GM12878 (cell line): ENCODE measurements at regions of chr1 and their contacts with region 1.

Region 1: DNA sequence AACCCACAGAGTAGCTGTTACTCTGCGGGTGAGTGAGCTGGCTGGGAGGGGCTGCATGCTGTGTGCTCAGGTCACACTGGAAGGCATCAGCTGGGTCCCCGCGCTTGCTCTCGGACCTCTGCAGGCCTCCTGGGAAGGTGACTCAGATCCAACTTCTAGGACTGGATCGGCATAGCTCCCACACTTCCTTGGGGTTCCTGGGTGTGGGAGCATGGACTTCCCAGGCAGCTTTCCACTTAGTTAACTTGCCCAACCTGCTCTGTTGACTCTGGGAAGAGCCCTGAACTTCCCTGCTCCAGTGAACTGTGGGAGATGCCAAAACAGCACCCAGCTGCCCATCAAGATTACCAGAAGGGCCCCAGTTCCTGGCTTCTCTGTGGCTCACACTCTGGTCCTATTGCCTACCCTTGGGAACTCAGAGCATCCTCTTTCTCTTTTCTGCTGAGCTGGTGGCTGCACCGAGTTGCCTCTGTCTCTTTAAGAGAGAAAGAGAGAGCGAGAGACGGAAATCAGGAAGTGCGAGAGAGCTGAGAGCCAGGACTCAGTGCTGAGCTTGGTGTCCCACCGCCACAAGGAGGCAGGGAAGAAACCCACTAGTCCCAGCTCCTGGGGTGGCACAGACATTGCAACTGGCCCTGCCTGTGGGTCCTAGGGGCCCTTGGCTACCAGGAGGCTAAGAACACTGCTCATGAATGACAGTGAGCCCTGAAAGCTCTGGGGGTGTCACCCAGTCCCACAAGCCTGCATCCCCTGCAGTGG is at the start of gene IKBKE:
- DNase-seq: no peak
- ATAC-seq: peak; percentile 73
- H3K4me3 ChIP-seq: peak within 1 kb of the TSS; percentile 94
- H3K27ac ChIP-seq: peak within 1 kb of the TSS; percentile 88
- H3K4me1 ChIP-seq: peaks cover 66% of the 10 kb centered on the region
- H3K27me3 ChIP-seq: no peaks in the 10 kb centered on the region
- CTCF ChIP-seq: peak; percentile 7 to 22 (median 17); a peak in 1 of 6 replicates
- EP300 ChIP-seq: no peak
- POLR2A ChIP-seq: peak; percentile 68
- RAD21 ChIP-seq: no peak
- polyA plus RNA-seq, gene IKBKE: 12.8 to 19.2 TPM

Region 2: DNA sequence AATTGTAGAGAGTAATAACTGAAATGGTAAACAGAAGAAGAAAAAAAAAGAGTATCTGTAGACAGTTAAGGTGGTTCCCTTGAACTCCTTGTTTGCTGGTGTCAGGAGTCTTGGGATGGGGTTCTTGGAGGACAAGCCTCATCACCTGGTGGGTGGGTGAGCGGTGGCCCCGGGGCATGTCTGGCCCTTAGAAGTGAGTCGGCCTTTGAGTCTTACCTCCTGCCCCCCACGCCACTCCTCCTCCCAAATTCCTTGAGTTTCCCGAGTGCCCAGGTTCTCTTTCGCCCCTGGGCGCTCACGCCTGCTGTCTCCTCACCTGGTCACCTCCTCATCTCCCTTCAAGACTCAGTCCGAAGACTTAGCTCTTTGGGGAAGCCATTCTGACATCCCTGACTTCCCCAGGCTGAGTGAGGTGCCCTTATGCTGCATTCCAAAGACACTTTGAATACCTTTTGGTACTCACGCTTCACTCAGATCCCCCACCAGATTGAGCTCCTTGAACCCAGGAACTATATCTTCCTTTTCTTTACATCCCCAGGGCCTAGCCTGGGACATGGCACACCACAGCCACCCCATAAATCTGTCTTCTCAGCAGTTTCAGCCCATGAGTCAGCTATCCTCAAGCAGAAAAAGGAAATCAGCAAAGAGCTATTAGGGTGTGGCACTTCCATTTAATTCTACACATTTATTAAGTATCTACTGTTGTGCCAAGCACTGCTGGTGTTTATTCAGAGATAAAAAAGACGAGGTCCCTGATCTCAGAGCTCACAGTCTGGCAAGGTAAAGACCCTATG is 13.3 kb before region 1 on chr1:
- CTCF ChIA-PET with region 1: interaction called, 199 read pairs
- POLR2A ChIA-PET with region 1: interaction called, 4 read pairs
- RAD21 ChIA-PET with region 1: interaction called, 11 read pairs
- SMC1A ChIA-PET with region 1: interaction called, 26 read pairs
- in situ Hi-C with region 1: no loop called
- intact Hi-C with region 1: no loop called
- DNase-seq: no peak
- ATAC-seq: no peak
- H3K4me3 ChIP-seq: no peak overlapping the region
- H3K27ac ChIP-seq: no peak overlapping the region
- H3K4me1 ChIP-seq: no peaks in the 10 kb centered on the region
- H3K27me3 ChIP-seq: no peaks in the 10 kb centered on the region
- CTCF ChIP-seq: no peak
- EP300 ChIP-seq: no peak
- POLR2A ChIP-seq: no peak
- RAD21 ChIP-seq: no peak

Region 3: DNA sequence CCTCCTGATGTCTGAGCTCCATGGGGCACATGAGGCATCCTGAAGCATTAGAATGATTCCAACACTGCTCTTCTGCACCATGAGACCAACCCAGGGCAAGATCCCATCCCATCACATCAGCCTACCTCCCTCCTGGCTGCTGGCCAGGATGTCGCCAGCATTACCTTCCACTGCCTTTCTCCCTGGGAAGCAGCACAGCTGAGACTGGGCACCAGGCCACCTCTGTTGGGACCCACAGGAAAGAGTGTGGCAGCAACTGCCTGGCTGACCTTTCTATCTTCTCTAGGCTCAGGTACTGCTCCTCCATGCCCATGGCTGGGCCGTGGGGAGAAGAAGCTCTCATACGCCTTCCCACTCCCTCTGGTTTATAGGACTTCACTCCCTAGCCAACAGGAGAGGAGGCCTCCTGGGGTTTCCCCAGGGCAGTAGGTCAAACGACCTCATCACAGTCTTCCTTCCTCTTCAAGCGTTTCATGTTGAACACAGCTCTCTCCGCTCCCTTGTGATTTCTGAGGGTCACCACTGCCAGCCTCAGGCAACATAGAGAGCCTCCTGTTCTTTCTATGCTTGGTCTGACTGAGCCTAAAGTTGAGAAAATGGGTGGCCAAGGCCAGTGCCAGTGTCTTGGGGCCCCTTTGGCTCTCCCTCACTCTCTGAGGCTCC is 26.1 kb after region 1 on chr1:
- CTCF ChIA-PET with region 1: interaction called, 18 read pairs
- POLR2A ChIA-PET with region 1: interaction called, 37 read pairs
- RAD21 ChIA-PET with region 1: interaction called, 32 read pairs
- SMC1A ChIA-PET with region 1: interaction called, 19 read pairs
- in situ Hi-C with region 1: no loop called
- intact Hi-C with region 1: no loop called
- DNase-seq: no peak
- ATAC-seq: peak; percentile 88
- H3K4me3 ChIP-seq: peak overlapping the region; percentile 34; the same call in 1 of the 2 replicates
- H3K27ac ChIP-seq: peak overlapping the region; percentile 90
- H3K4me1 ChIP-seq: peaks cover 39% of the 10 kb centered on the region
- H3K27me3 ChIP-seq: no peaks in the 10 kb centered on the region
- CTCF ChIP-seq: no peak
- EP300 ChIP-seq: 0 out of 4 replicates have a peak, but pooled peaks of 1 of the 2 experiments have one; percentile 29
- POLR2A ChIP-seq: no peak
- RAD21 ChIP-seq: no peak

Region 4: DNA sequence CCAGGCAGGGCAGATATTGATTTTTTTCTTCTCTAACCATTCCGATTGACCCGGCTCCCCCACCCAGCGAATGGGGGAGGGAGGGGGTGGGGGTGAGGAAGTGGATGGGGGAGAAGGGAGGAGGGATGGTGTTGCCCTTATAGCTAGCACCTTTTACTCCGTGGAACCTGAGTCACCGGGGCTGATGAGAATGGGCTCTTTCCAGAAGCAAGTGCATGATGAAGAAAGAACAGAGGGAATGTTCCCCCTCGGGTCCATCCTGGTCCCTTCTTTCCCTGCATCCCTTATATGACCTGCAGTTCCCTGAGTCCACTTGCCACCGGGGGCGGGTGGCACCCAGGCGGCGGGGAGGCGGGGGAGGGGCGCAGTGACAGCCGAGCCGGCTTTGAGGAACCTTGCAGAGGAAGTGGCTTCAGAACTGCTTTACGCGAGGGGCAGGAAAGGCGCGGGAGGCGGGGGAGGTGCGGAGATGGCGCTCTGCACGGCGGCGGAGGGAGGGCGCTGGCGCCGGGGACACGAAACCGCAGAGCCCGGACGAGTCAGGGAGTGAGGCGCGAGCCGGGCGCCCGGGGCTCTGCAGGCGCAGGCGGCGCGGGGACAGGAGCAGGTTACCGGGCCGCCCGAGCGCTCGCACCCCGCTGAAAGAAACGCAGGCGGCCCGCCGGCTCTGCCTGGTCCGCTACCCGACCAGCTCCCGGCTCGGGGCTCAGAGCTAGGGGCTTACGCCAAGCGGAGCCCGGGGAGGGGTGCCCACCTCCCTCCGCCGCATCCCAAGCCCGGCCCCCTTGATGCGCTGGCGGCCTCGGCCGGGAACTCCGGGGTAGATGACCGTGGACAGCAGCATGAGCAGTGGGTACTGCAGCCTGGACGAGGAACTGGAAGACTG is 86.9 kb after region 1 on chr1:
- CTCF ChIA-PET with region 1: interaction called, 4 read pairs
- POLR2A ChIA-PET with region 1: interaction called, 8 read pairs
- RAD21 ChIA-PET with region 1: interaction called, 22 read pairs
- SMC1A ChIA-PET with region 1: interaction called, 15 read pairs
- in situ Hi-C with region 1: no loop called
- intact Hi-C with region 1: loop called (anchors 5 kb)
- DNase-seq: no peak
- ATAC-seq: peak; percentile 76
- H3K4me3 ChIP-seq: peak overlapping the region; percentile 95
- H3K27ac ChIP-seq: peak overlapping the region; percentile 98
- H3K4me1 ChIP-seq: peaks cover 42% of the 10 kb centered on the region
- H3K27me3 ChIP-seq: no peaks in the 10 kb centered on the region
- CTCF ChIP-seq: no peak
- EP300 ChIP-seq: peak in 1 of 2 experiments; percentile 51; a peak in 2 of 4 replicates
- POLR2A ChIP-seq: peak; percentile 90
- RAD21 ChIP-seq: no peak

Region 5: GRCh38 chr1:206606856-206607255 is 136.7 kb after region 1 on chr1:
- CTCF ChIA-PET with region 1: interaction called, 18 read pairs
- POLR2A ChIA-PET with region 1: interaction called, 5 read pairs
- RAD21 ChIA-PET with region 1: interaction called, 11 read pairs
- SMC1A ChIA-PET with region 1: no interaction called
- in situ Hi-C with region 1: no loop called
- intact Hi-C with region 1: no loop called
- DNase-seq: no peak
- ATAC-seq: peak; percentile 49
- H3K4me3 ChIP-seq: no peak overlapping the region
- H3K27ac ChIP-seq: no peak overlapping the region
- H3K4me1 ChIP-seq: peaks cover 31% of the 10 kb centered on the region
- H3K27me3 ChIP-seq: no peaks in the 10 kb centered on the region
- CTCF ChIP-seq: peak; percentile 43 to 63 (median 57); a peak in 5 of 6 replicates
- EP300 ChIP-seq: no peak
- POLR2A ChIP-seq: no peak
- RAD21 ChIP-seq: no peak

Region 6: DNA sequence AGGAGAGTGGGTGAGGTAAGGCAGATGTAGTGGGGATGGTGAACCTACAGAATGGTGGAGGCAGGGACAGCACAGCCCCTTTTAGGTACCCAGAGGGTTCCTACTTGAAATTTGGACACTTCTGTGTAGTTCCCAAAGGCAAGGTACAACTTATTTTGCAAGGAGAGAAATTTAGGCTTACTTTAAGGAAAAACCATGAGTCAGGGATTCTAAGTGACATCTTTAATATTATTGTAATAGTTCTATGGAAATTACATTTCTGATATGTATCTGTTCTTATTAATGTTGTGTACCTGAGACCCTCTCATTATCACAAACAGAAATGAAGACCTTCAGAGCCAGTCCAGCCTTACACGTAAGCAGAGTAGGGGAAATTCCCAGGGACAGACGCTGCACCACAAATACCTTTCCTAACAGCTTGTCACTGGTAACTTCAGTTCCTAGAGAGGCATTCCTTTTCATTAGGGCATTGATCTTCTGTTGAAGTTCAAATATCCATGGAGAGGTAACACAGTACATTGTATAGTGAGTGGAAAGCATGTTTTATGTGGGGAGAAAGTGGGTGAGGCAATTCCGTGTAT is 173.1 kb after region 1 on chr1:
- CTCF ChIA-PET with region 1: no interaction called
- POLR2A ChIA-PET with region 1: no interaction called
- RAD21 ChIA-PET with region 1: no interaction called
- SMC1A ChIA-PET with region 1: no interaction called
- in situ Hi-C with region 1: no loop called
- intact Hi-C with region 1: no loop called
- DNase-seq: no peak
- ATAC-seq: peak; percentile 88
- H3K4me3 ChIP-seq: no peak overlapping the region
- H3K27ac ChIP-seq: peak overlapping the region; percentile 51; the same call in 1 of the 2 replicates
- H3K4me1 ChIP-seq: peaks cover 4% of the 10 kb centered on the region; the same call in 1 of the 2 replicates
- H3K27me3 ChIP-seq: no peaks in the 10 kb centered on the region
- CTCF ChIP-seq: no peak
- EP300 ChIP-seq: no peak
- POLR2A ChIP-seq: no peak
- RAD21 ChIP-seq: no peak

Region 7: GRCh38 chr1:206865013-206865671 is 395.0 kb after region 1 on chr1 and contains the start of gene IL20:
- CTCF ChIA-PET with region 1: no interaction called
- POLR2A ChIA-PET with region 1: no interaction called
- RAD21 ChIA-PET with region 1: no interaction called
- SMC1A ChIA-PET with region 1: no interaction called
- in situ Hi-C with region 1: no loop called
- intact Hi-C with region 1: no loop called
- DNase-seq: peak; percentile 31
- ATAC-seq: peak; percentile 95
- H3K4me3 ChIP-seq: no peak within 1 kb of the TSS
- H3K27ac ChIP-seq: no peak within 1 kb of the TSS
- H3K4me1 ChIP-seq: no peaks in the 10 kb centered on the region
- H3K27me3 ChIP-seq: peaks cover 0 to 2% of the 10 kb centered on the region in 2 experiments; a peak in 1 of 4 replicates
- CTCF ChIP-seq: peak; percentile 81 to 95 (median 93)
- EP300 ChIP-seq: no peak
- POLR2A ChIP-seq: no peak
- RAD21 ChIP-seq: peak; percentile 69
- polyA plus RNA-seq, gene IL20: 0.08 TPM in 1 of 2 experiments, not detected in the other